ENCODE measurements at regions of chr4 and their contacts with region 1.

Region 1: DNA sequence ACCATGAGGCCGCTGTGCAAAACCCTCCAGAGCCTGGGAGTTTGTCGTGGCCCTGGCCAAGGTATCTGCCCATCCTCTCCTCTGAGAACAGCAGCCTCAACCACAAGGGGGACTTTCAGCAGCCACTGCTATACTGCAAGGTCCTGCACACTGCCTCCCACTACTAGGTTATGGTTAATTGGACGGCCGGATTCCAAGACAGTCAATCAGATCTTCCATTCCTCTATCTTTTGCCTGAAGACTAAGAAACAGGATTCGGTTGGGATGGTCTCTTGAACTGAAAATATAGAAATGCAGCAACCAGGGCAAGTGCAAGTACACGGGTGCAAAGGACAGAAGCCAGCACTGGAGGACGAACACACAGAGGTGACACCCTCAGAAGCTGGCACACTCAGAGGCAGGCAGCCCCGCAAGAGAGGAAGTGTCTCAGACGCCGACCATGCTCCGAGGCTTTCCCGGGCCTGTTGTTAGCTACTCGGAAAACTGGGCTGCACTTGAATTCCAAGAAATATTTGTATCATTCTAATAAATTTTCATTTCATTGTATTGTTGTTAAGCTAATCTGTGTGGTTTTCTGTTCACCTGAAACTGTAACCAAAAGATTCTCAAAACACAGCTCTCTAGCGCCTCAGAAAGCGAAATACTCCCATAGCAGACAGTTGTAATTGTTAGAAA is 63.3 kb downstream of the AFAP1 start:
- DNase-seq: no peak
- H3K4me3 ChIP-seq: no peak overlapping the region; the same call in 1 of the 2 replicates
- CTCF ChIP-seq: peak; percentile 61

Region 2: GRCh38 chr4:7770224-7771050 is 105.9 kb before region 1 on chr4:
- CTCF ChIA-PET with region 1: no interaction called
- POLR2A ChIA-PET with region 1: no interaction called
- DNase-seq: no peak
- H3K4me3 ChIP-seq: no peak overlapping the region
- CTCF ChIP-seq: peak; percentile 71

Region 3: GRCh38 chr4:7909463-7910262 is 33.3 kb after region 1 on chr4:
- CTCF ChIA-PET with region 1: interaction called, 10 read pairs
- POLR2A ChIA-PET with region 1: interaction called, 4 read pairs
- DNase-seq: no peak
- H3K4me3 ChIP-seq: no peak overlapping the region
- CTCF ChIP-seq: no peak

Region 4: GRCh38 chr4:7939377-7940108 is 63.2 kb after region 1 on chr4 and contains the start of gene AFAP1:
- CTCF ChIA-PET with region 1: interaction called, 10 read pairs
- POLR2A ChIA-PET with region 1: interaction called, 3 read pairs
- DNase-seq: no peak
- H3K4me3 ChIP-seq: peak within 1 kb of the TSS; percentile 78
- CTCF ChIP-seq: no peak